ENCODE measurements at regions of chr7 and their contacts with region 1.

Region 1: DNA sequence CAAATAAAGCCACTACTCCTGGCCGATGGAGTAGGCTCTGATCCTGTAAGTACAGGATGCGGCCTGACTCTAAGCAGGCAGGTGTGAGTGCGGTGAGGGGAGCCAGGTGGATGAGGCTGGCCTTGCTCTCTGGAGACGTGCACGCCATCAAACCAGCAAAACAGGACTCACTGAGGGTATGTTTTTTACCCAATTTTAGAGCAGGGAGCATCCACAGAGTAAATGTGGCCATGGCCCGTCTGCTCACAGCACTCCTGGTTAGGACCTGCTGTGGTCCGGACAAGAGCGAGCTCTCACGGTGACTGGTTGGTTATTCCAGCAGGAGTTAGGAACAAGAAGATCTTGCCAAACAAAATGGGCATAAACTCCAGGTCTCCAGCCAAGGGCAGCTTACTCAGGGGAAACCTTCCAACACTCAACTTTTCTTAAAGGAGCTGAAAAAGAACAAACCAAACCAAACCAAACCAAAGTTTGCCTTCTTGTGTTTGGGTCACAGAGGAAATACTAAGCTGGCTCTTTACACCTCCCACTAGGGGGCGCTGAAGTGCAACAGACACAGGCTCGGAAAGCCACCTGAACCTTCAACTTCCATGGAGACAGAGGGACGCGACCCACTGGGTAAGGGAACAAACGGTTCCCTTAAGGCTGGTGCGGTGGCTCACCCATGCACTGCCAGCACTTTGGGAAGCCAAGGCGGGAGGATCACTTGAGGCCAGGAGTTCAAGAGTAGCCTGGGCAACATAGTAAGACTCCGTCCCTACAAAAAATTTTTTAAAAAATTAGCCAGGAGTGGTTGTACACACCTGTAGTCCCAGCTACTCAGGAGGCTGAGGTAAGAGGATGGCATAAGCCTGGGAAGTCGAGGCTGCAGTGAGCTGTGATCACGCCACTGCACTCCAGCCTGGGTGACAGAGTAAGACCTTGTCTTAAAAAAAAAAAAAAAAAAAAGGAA is 122.4 kb downstream of the CLEC2L start:
- DNase-seq: peak; percentile 62 to 84
- ATAC-seq: peak; percentile 83 to 84; a peak in 5 of 6 replicates
- H3K4me3 ChIP-seq: no peak overlapping the region
- H3K27ac ChIP-seq: peak overlapping the region; percentile 63 to 74; a peak in 5 of 6 replicates
- H3K4me1 ChIP-seq: peaks cover 43% of the 10 kb centered on the region
- CTCF ChIP-seq: peak; percentile 92
- EP300 ChIP-seq: no peak
- POLR2A ChIP-seq: no peak
- RAD21 ChIP-seq: peak; percentile 96

Region 2: GRCh38 chr7:139626817-139627216 is 19.0 kb before region 1 on chr7:
- CTCF ChIA-PET with region 1: interaction called, 63 read pairs
- POLR2A ChIA-PET with region 1: no interaction called
- DNase-seq: no peak
- ATAC-seq: no peak
- H3K4me3 ChIP-seq: no peak overlapping the region
- H3K27ac ChIP-seq: no peak overlapping the region
- H3K4me1 ChIP-seq: no peaks in the 10 kb centered on the region
- CTCF ChIP-seq: no peak
- EP300 ChIP-seq: no peak
- POLR2A ChIP-seq: no peak
- RAD21 ChIP-seq: no peak

Region 3: GRCh38 chr7:139680676-139681462 is 35.0 kb after region 1 on chr7:
- CTCF ChIA-PET with region 1: interaction called, 26 read pairs
- POLR2A ChIA-PET with region 1: no interaction called
- DNase-seq: peak; percentile 88 to 90
- ATAC-seq: peak; percentile 80 to 83
- H3K4me3 ChIP-seq: no peak overlapping the region
- H3K27ac ChIP-seq: peak overlapping the region; percentile 79 to 97
- H3K4me1 ChIP-seq: peaks cover 55% of the 10 kb centered on the region
- CTCF ChIP-seq: no peak
- EP300 ChIP-seq: peak in 1 of 2 experiments; percentile 45; a peak in 1 of 5 replicates
- POLR2A ChIP-seq: no peak
- RAD21 ChIP-seq: 0 out of 5 replicates have a peak, but pooled peaks of 1 of the 2 experiments have one; percentile 9

Region 4: GRCh38 chr7:139767561-139767982 is 121.7 kb after region 1 on chr7:
- CTCF ChIA-PET with region 1: interaction called, 36 read pairs
- POLR2A ChIA-PET with region 1: no interaction called
- DNase-seq: no peak
- ATAC-seq: no peak
- H3K4me3 ChIP-seq: no peak overlapping the region
- H3K27ac ChIP-seq: peak overlapping the region in 1 of 2 experiments; percentile 6; a peak in 1 of 6 replicates
- H3K4me1 ChIP-seq: peaks cover 32% of the 10 kb centered on the region
- CTCF ChIP-seq: no peak
- EP300 ChIP-seq: no peak
- POLR2A ChIP-seq: no peak
- RAD21 ChIP-seq: no peak

Region 5: DNA sequence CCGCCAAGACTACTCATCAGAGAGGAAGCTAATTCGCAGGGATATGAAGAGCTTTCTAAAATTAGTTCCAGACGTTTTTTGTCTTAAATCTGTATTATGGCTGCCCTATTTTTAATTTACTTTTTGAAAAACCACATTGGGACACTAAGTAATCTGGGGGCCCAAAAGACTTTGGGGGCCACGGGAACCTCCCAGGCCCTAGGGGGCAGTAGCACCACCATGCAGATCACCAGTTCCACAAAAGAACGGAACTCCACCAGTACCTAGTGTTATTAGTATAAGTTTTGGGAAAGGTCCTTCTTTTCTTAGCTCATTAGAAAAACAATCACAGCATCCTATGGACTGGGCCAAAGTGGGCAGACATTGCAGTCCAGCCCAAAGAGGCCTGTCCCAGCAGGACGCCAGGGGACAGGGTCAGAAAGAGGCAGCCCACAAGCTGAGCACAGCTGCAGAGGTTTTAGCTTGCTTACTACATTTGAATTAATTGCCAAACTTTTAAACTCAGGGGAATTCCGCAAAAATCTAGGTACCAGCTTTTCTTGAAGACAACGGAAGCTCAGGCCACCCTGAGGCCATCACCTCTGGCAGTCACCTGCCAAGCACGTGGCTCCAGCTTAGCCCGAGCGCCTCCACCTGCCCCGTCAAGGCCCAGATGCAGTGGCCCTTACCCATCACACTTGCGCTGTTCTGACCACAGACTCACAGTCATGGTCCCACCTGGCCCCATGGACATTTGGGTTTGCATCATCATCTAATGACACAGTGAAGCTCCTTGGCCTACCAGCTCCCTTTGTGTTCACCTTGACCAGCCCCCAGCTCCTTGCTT is 342.1 kb after region 1 on chr7:
- CTCF ChIA-PET with region 1: interaction called, 28 read pairs
- POLR2A ChIA-PET with region 1: no interaction called
- DNase-seq: no peak
- ATAC-seq: no peak
- H3K4me3 ChIP-seq: no peak overlapping the region
- H3K27ac ChIP-seq: no peak overlapping the region
- H3K4me1 ChIP-seq: peaks cover 9% of the 10 kb centered on the region
- CTCF ChIP-seq: no peak; the same call in 2 of the 3 replicates
- EP300 ChIP-seq: no peak
- POLR2A ChIP-seq: no peak
- RAD21 ChIP-seq: no peak